ENCODE measurements at regions of chr2 and their contacts with region 1.

Region 1: GRCh38 chr2:53970724-53971602 is at the start of gene PSME4:
- DNase-seq: peak; percentile 95
- H3K4me3 Mint-ChIP-seq: peak within 1 kb of the TSS; percentile 80
- H3K27ac Mint-ChIP-seq: peak within 1 kb of the TSS; percentile 85
- H3K4me1 Mint-ChIP-seq: peaks cover 37% of the 10 kb centered on the region
- H3K27me3 Mint-ChIP-seq: no peaks in the 10 kb centered on the region
- total RNA-seq, gene PSME4: 35.2 to 36.9 TPM

Region 2: GRCh38 chr2:53767405-53768241 is 203.3 kb before region 1 on chr2 and contains the start of gene CHAC2:
- CTCF ChIA-PET with region 1: no interaction called
- POLR2A ChIA-PET with region 1: interaction called, 5 read pairs
- intact Hi-C with region 1: loop called (anchors 5 kb)
- DNase-seq: peak; percentile 91
- H3K4me3 Mint-ChIP-seq: peak within 1 kb of the TSS; percentile 93
- H3K27ac Mint-ChIP-seq: peak within 1 kb of the TSS; percentile 97
- H3K4me1 Mint-ChIP-seq: peaks cover 27% of the 10 kb centered on the region
- H3K27me3 Mint-ChIP-seq: no peaks in the 10 kb centered on the region
- total RNA-seq, gene CHAC2: 13.2 to 15.0 TPM

Region 3: DNA sequence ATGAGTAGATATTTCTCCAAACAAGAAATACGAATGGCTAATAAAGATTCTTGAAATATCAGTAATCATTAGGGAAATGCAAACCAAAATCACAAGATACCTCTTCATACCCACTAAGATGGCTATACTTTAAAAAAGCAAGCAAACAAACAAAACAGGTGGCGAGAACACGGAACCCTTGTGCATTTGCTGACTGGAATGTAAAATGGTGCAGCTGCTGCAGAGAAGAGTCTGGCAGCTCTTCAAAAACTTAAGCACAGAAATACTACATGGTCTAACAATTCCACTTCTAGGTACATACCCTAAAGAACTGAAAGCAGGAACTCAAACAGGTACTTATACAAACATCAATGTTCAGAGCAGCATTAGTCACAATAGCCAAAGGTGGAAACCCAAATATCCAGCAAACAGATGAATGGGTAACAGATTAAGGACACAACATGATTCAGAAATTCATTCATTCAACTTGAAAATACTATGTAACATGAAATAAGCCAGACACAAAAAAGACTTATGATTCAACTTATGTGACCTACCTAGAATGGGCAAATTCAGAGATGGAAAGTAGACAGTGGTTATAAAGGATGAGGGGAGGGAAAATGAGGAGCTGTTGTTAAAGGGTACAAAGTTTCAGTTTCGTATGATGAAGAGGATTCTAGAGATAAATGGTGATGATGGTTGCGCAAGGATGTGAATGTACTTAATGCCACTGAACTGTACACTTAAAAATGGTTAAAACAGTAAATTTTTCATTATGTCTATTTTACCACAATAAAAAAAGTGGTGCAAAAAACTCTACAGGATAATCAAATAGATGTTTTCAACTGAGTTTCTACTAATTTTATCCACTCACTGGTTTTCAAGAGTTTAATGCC is 84.3 kb before region 1 on chr2:
- CTCF ChIA-PET with region 1: no interaction called
- POLR2A ChIA-PET with region 1: interaction called, 4 read pairs
- intact Hi-C with region 1: loop called (anchors 2 kb)
- DNase-seq: no peak
- H3K4me3 Mint-ChIP-seq: no peak overlapping the region
- H3K27ac Mint-ChIP-seq: peak overlapping the region; percentile 10
- H3K4me1 Mint-ChIP-seq: peaks cover 34% of the 10 kb centered on the region
- H3K27me3 Mint-ChIP-seq: no peaks in the 10 kb centered on the region

Region 4: DNA sequence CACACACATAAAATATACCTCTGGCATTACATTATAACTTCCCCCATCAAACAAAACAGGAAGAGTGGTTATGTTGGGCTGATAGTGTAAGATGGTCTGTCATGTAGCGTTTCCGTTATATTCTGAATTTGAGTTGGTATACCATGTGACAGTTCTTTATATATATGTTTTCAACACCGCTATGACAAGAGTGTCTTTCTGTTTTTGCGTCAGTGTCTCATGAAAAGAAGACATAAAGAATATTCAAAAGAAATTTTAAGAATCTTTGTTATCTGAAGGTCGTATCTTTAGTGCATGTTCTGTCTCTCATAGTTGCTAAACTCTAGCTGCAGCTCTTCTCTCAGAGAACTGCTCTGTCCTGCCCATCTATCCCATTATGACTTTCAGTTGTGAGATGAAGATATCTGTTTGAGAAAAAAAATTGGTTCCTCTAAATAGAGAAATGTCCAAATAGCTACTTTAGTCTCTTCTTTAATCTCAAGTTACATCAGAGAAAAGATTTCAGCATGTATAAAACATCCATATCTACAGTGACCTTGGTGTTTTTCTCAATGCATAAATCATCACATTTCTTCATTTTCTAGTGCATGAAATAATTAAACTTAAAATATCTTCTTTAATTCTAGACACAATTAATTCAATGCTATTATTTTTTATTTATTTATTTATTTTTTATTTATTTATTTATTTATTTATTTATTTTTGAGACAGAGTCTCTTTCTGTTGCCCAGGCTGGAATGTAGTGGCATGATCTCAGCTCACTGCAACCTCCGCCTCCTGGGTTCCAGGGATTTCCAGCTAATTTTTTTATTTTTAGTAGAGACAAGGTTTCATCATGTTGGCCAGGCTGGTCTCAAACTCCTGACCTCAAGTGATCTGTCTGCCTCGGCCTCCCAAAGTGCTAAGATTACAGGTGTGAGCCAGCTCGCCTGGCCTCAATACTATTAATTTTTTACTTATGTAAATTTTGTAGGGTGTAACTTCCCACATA is 24.1 kb after region 1 on chr2:
- CTCF ChIA-PET with region 1: no interaction called
- POLR2A ChIA-PET with region 1: interaction called, 6 read pairs
- intact Hi-C with region 1: loop called (anchors 1 kb)
- DNase-seq: no peak
- H3K4me3 Mint-ChIP-seq: peak overlapping the region; percentile 33
- H3K27ac Mint-ChIP-seq: peak overlapping the region; percentile 46
- H3K4me1 Mint-ChIP-seq: peaks cover 17% of the 10 kb centered on the region
- H3K27me3 Mint-ChIP-seq: no peaks in the 10 kb centered on the region

Region 5: DNA sequence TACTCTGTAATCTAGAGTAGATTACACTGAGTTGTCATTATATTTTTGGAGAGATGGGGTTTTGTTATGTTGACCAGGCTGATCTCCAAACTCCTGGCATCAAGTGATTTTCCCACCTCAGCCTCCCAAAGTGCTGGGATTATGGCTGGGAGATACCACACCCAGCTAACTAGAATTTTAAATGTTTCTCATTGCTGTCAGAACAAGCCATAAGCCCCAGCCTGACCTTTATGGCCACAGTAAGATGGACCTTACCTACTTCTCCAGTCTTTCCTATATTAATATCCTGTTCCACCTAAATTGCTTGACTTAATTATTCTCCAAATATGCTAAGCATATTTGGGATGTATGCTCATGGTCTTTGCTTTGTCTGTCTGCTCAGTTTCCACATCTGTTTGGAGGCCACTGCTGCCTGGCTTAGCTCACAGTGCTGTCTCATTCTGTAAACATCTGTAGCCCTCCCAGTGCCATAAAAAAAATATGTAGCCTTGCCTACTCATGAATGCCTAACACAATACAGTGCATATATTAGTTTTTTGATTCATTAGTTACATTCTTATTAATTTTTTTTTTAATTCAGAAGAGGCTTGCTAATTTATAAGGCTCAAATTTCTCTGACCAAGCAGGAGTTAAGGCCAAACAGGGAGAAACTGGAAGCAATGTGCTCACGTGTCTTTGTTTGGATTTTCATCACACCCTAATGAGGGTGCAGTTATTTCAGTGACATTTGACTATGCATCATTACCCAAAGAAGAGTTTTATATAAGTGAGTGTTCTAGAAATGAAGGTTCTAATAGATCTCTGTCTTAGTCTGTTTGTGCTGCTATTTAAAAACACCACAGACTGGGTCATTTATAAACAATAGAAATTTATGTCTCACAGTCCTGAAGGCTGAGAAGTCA is 45.1 kb after region 1 on chr2:
- CTCF ChIA-PET with region 1: no interaction called
- POLR2A ChIA-PET with region 1: no interaction called
- intact Hi-C with region 1: no loop called
- DNase-seq: no peak
- H3K4me3 Mint-ChIP-seq: no peak overlapping the region
- H3K27ac Mint-ChIP-seq: no peak overlapping the region
- H3K4me1 Mint-ChIP-seq: peaks cover 21% of the 10 kb centered on the region
- H3K27me3 Mint-ChIP-seq: no peaks in the 10 kb centered on the region

Region 6: GRCh38 chr2:54052825-54053718 is 82.1 kb after region 1 on chr2:
- CTCF ChIA-PET with region 1: interaction called, 3 read pairs
- POLR2A ChIA-PET with region 1: interaction called, 3 read pairs
- intact Hi-C with region 1: loop called (anchors 1 kb)
- DNase-seq: no peak
- H3K4me3 Mint-ChIP-seq: no peak overlapping the region
- H3K27ac Mint-ChIP-seq: peak overlapping the region; percentile 52
- H3K4me1 Mint-ChIP-seq: peaks cover 27% of the 10 kb centered on the region
- H3K27me3 Mint-ChIP-seq: no peaks in the 10 kb centered on the region

Region 7: GRCh38 chr2:54115284-54116137 is 144.5 kb after region 1 on chr2 and contains the start of gene ACYP2:
- CTCF ChIA-PET with region 1: no interaction called
- POLR2A ChIA-PET with region 1: interaction called, 7 read pairs
- intact Hi-C with region 1: loop called (anchors 2 kb)
- DNase-seq: peak; percentile 95
- H3K4me3 Mint-ChIP-seq: peak within 1 kb of the TSS; percentile 94
- H3K27ac Mint-ChIP-seq: peak within 1 kb of the TSS; percentile 99
- H3K4me1 Mint-ChIP-seq: peaks cover 13% of the 10 kb centered on the region
- H3K27me3 Mint-ChIP-seq: no peaks in the 10 kb centered on the region
- total RNA-seq, gene ACYP2: 5.6 to 6.4 TPM

Region 8: GRCh38 chr2:54279385-54279784 is 308.4 kb after region 1 on chr2:
- CTCF ChIA-PET with region 1: no interaction called
- POLR2A ChIA-PET with region 1: no interaction called
- intact Hi-C with region 1: no loop called
- DNase-seq: no peak
- H3K4me3 Mint-ChIP-seq: no peak overlapping the region
- H3K27ac Mint-ChIP-seq: no peak overlapping the region
- H3K4me1 Mint-ChIP-seq: peaks cover 4% of the 10 kb centered on the region
- H3K27me3 Mint-ChIP-seq: no peaks in the 10 kb centered on the region

Region 9: DNA sequence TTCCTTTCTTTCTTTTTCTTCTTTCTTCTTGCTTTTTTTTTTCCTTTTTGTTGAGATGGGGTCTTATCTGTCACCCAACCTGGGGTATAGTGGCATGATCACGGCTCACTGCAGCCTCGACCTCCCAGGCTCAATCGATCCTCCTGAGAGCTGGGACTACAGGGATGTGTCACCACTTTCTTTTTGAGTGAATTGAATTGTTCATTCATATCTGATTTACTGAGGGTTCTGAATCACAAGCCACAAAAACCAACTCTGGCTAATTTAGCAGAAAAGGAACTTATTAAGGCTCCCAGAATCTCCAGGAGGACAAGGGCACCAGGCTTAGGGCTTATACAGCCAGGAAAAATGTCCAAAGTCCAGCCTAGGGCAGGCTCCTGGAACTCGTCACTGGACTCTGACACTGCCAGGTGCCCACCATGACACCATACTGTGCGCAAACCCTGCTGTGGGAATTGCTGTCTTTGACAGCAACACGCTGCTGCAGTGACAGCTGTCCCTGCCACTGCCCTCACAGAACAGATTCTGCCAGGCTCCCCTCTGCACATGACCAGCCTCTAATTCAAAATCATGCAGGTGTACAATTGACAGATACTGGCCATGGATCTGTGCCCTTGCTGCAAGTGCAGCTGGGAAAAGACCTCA is 709.6 kb after region 1 on chr2:
- CTCF ChIA-PET with region 1: no interaction called
- POLR2A ChIA-PET with region 1: no interaction called
- intact Hi-C with region 1: loop called (anchors 5 kb)
- DNase-seq: peak; percentile 65
- H3K4me3 Mint-ChIP-seq: peak overlapping the region; percentile 47
- H3K27ac Mint-ChIP-seq: no peak overlapping the region
- H3K4me1 Mint-ChIP-seq: peaks cover 21% of the 10 kb centered on the region
- H3K27me3 Mint-ChIP-seq: peaks cover 68% of the 10 kb centered on the region